Endothelial cell of umbilical vein (primary cell): ENCODE measurements at regions of chr19 and their contacts with region 1.

Region 1: DNA sequence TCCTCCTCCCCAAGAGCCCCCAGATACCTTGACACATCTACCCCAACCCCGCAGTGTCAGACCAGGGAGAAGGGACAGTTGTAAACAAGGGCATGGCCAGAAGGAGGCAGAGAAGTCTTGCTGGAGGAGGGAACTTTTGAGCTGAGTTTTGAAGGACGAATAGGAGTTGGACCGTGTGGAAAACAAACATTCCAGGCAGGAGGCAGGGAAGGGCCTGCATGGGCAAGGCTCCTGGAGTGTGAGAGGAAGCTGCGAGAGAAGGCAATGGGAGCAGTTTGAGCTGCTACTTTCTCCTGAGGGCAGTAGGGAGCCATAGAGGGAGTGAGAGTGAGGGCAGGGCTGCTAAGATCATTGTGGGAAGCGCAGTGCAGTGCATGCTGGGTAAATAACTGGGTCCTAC is 23.3 kb downstream of the IL12RB1 start:
- DNase-seq: no peak
- H3K4me3 ChIP-seq: no peak overlapping the region
- H3K27ac ChIP-seq: no peak overlapping the region
- H3K4me1 ChIP-seq: peaks cover 2% of the 10 kb centered on the region
- H3K27me3 ChIP-seq: no peaks in the 10 kb centered on the region
- CTCF ChIP-seq: peak in 1 of 2 donors; percentile 6
- POLR2A ChIP-seq: no peak

Region 2: DNA sequence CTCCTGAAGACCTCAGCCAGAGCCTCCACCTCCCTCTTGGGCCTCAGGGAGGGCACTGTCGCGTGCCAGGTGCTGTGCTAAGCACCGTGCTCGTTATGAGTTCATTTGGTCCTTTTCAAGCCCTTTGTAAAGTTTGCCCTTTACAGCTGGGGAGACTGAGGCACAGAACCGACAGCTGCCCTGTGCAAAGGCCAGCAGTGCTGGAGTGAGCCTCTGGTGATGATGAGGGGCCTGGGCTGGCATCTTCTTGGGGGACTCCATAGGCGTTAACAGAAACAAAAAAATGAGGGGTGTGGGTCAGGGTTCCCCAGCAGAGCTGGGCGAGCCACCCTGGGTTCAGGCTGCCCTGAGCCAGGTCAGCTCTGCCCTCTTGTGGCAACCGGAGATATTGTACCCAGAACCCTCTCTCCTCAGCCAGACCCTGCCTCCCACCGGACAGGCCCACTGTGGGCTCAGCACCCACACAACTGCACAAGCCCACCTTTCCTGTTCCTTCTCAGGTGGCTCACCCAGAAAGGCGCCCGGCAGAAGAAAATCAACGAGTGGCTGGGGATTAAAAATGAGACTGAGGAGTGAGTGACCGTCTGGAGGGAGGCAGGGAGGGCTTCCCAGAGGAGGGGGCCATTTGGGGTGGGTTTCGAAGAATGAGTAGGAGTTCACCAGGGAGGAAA is 104.6 kb after region 1 on chr19:
- CTCF ChIA-PET with region 1: interaction called, 3 read pairs
- POLR2A ChIA-PET with region 1: no interaction called
- dilution Hi-C with region 1: no loop called
- intact Hi-C with region 1: loop called (anchors 1 kb)
- DNase-seq: peak; percentile 24
- H3K4me3 ChIP-seq: no peak overlapping the region
- H3K27ac ChIP-seq: no peak overlapping the region
- H3K4me1 ChIP-seq: no peaks in the 10 kb centered on the region
- H3K27me3 ChIP-seq: no peaks in the 10 kb centered on the region
- CTCF ChIP-seq: peak; percentile 63 to 84
- POLR2A ChIP-seq: no peak